Ascending aorta (tissue), 2 donors: ENCODE measurements at regions of chr19 and their contacts with region 1.

Region 1: GRCh38 chr19:48333467-48334384 is 8.4 kb downstream of the EMP3 start:
- DNase-seq: peak; percentile 68 to 93
- H3K4me3 ChIP-seq: peak overlapping the region; percentile 29 to 66
- H3K27ac ChIP-seq: peak overlapping the region; percentile 79 to 89
- H3K4me1 ChIP-seq: peaks cover 0 to 11% of the 10 kb centered on the region in 2 donors
- H3K27me3 ChIP-seq: no peaks in the 10 kb centered on the region
- CTCF ChIP-seq: peak; percentile 84 to 93 (median 92)

Region 2: GRCh38 chr19:48186541-48186991 is 147.2 kb before region 1 on chr19:
- intact Hi-C with region 1: no loop called
- DNase-seq: peak in 1 of 2 donors; percentile 52
- H3K4me3 ChIP-seq: no peak overlapping the region
- H3K27ac ChIP-seq: no peak overlapping the region
- H3K4me1 ChIP-seq: no peaks in the 10 kb centered on the region
- H3K27me3 ChIP-seq: no peaks in the 10 kb centered on the region
- CTCF ChIP-seq: no peak

Region 3: GRCh38 chr19:48271531-48272151 is 62.1 kb before region 1 on chr19:
- intact Hi-C with region 1: loop called (anchors 1 kb)
- DNase-seq: peak in 1 of 2 donors; percentile 52
- H3K4me3 ChIP-seq: peak overlapping the region; percentile 43 to 62
- H3K27ac ChIP-seq: no peak overlapping the region
- H3K4me1 ChIP-seq: peaks cover 0 to 4% of the 10 kb centered on the region in 2 donors
- H3K27me3 ChIP-seq: no peaks in the 10 kb centered on the region
- CTCF ChIP-seq: no peak

Region 4: DNA sequence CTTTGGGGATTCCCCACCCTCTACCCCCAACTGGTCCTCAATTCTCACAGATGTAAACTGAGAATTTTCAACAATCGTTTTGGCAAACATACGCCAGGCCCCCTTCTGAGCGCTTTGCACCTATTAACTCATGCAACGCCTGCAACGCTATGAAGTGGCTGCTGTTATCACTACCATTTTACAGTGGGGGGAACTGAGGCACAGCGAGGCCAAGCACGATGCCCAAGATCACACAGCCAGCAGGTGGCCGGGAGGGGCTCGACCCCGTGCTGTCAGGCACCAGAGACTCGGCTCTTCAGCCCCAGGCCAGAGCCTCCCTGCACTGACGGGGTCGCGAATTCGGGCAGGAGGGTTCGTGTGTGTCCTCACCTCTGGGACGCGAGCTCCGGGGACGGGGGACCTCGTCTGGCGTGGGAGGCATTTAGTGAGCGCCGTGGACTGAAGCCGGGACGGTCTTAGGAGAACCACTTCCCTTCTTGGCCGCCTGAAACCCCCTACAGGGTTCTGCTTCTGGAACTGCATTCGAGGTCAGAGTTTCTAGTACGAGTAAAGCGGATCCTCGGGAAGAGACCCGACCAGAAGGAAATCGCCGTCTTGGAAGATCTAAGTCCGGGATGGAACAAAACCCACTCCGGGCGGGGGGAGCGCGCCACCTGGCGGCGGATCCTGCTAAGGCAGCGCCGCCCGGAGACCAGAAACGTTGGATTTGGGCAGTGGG is 42.8 kb before region 1 on chr19:
- intact Hi-C with region 1: loop called (anchors 1 kb)
- DNase-seq: peak in 1 of 2 donors; percentile 86
- H3K4me3 ChIP-seq: peak overlapping the region; percentile 45 to 59
- H3K27ac ChIP-seq: no peak overlapping the region
- H3K4me1 ChIP-seq: peaks cover 7 to 8% of the 10 kb centered on the region in 2 donors
- H3K27me3 ChIP-seq: no peaks in the 10 kb centered on the region
- CTCF ChIP-seq: peak; percentile 94 to 98 (median 96)

Region 5: DNA sequence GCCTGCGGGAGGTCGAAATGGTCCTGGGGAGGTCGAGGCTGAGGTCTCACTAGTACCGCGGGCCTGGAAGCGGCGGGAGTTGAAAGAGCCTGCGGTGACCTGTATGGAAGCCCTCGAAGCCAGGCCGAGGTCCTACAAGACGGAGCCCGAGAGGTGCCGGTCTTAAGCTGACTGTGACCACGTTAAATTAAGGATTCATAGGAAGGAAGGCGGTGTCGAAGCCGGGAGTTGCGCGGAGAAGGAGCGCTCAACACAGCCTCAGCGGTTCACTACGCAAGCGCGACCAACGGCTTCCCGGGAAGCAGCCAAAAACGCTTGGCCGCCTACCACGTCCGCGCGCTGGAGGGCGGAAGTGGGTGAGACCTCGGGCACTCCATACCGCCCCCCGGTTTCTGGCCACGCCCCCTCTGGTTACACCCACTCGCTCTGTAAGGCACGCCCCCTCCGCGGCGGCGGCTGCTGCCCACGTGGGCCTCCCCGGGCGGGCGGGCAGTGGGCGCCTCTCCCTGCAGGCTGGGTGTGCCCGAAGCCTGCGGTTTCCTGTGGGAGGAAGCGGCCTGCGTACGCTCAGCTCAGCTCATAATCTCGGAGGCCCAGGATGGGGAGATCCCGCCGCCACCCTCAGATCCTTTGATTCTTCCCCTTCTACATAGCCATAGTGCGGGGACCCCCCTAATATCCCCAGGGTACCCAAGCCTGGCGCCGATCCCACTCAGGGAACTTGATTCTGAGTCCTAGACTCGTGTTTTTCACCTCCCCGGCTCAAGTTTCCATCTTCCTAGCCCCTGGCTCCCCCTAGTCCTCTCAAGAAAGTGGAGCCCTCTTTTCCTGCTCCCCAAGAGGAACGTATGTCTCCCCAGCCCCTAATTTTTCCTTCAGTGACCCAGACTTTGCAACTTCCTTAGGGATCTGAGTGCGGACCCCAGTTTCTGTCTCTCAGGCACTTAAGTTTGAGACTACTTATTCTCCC is 11.8 kb before region 1 on chr19:
- intact Hi-C with region 1: loop called (anchors 1 kb)
- DNase-seq: peak; percentile 94 to 99
- H3K4me3 ChIP-seq: peak overlapping the region; percentile 55 to 79
- H3K27ac ChIP-seq: peak overlapping the region; percentile 97 to 99
- H3K4me1 ChIP-seq: peaks cover 0 to 31% of the 10 kb centered on the region in 2 donors
- H3K27me3 ChIP-seq: no peaks in the 10 kb centered on the region
- CTCF ChIP-seq: no peak